A673 (cell line): ENCODE measurements at regions of chr6 and their contacts with region 1.

Region 1: DNA sequence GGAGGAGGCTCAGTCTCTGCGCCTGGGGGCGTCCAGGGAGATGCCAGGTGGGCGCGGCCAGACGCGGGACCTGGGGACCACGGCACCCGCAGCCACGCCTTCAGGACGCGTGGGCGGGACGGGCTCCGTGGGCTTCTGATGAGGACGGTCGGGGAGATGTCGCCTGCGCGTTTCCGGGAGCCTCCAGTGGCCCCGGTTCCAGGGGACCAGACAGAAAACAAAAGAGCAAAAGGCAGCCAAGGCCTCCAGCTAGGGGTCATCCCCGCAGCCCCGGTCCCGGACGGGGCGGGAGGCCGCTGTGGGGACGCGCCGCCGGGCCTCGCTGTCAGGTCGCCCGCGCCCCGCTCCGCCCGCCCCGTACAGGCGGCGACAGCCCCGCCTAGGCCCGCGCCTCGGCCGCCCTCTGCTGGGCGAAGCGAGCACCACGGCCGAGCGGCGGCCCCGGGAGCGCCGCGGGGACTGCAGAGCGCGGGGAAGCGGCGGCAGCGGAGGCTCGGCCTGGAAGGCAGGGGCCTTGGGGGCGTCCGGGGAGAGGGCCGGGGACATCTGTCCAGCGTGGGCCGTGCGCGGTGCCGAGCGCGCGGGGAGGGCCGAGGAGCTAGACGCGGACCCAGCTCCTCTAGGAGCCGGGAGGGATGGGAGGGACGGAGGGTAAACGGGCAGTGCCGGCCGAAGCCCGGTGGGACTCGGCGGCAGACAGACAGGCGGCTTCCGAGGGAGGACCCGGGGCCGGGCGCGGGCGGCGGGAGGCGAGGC is 48.7 kb downstream of the TMEM242 start:
- DNase-seq: peak; percentile 86
- H3K4me3 ChIP-seq: peak overlapping the region; percentile 62
- H3K27ac ChIP-seq: peak overlapping the region; percentile 61
- H3K4me1 ChIP-seq: peaks cover 14% of the 10 kb centered on the region
- H3K27me3 ChIP-seq: no peaks in the 10 kb centered on the region
- CTCF ChIP-seq: peak; percentile 51; the same call in 1 of the 2 replicates

Region 2: GRCh38 chr6:156564127-156564806 is 710.4 kb before region 1 on chr6:
- CTCF ChIA-PET with region 1: no interaction called
- POLR2A ChIA-PET with region 1: no interaction called
- intact Hi-C with region 1: loop called (anchors 10 kb)
- DNase-seq: peak; percentile 70
- H3K4me3 ChIP-seq: no peak overlapping the region
- H3K27ac ChIP-seq: no peak overlapping the region
- H3K4me1 ChIP-seq: no peaks in the 10 kb centered on the region
- H3K27me3 ChIP-seq: no peaks in the 10 kb centered on the region
- CTCF ChIP-seq: peak; percentile 99

Region 3: DNA sequence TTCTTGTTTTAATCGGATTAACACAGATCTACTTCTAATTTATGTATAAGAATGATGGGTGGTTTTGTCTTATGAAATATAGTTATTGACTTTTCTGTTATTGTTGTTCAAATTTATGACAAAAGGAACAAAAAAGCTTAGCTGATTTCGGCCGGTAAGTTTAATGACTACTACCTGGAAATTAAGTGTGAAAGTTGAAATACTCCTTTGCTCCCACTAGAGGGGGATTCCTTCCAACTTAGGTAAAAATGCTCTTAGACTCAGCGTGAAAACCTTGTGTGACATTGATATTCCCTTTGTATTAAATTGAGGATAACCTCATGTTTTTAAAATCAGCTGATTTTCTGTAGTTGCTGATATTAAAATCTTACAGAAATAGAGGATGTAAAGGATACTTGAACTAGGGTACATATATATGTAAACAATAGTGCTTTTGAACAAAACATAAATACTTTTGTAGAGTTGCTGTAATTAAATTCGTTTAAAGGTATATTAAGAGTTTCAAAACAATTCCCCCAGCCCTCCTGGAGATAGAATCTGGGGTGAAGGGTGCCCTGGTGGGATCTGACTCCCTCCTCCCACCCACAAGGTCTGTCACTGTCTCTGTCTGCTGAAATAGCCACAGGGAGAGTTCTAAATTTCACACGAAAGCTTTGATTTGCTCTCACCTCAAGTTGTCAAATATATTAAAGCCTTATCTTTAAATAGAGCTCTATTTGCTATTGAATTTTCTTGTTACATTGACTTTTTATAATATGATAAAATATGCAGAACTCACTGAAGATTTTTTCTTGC is 240.0 kb before region 1 on chr6:
- CTCF ChIA-PET with region 1: no interaction called
- POLR2A ChIA-PET with region 1: no interaction called
- intact Hi-C with region 1: loop called (anchors 10 kb)
- DNase-seq: peak; percentile 74
- H3K4me3 ChIP-seq: no peak overlapping the region
- H3K27ac ChIP-seq: no peak overlapping the region
- H3K4me1 ChIP-seq: peaks cover 34% of the 10 kb centered on the region
- H3K27me3 ChIP-seq: no peaks in the 10 kb centered on the region
- CTCF ChIP-seq: peak; percentile 71

Region 4: DNA sequence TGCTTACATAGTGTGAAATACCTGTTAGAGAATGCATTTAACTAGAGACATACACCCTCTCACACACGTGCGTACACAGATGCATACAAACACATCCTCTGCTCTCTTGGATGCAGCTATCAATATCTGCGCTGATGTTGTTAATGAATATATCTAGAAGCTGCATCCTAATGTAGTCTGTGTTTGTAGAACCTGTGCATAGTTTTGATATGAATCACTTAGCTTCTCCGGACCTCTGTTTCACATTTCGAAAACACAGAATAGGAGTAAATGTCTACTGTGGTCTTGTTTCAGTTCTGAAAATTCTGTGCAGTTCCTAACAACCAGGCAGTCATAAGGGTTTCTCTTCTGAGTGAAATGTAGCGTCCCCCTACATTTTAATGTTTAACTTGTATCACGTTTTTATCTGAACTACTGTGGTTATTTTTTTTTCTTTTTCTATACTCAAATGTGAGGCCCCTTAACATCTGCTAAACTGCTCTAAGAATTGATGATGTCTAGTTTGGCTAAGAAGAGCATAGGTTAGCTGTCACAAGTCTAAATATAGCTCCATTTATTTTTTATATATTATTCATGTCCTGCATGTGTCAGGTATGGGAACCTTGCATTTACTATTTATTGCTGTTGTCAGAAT is 205.8 kb before region 1 on chr6:
- CTCF ChIA-PET with region 1: no interaction called
- POLR2A ChIA-PET with region 1: no interaction called
- intact Hi-C with region 1: no loop called
- DNase-seq: no peak
- H3K4me3 ChIP-seq: no peak overlapping the region
- H3K27ac ChIP-seq: no peak overlapping the region
- H3K4me1 ChIP-seq: peaks cover 42% of the 10 kb centered on the region
- H3K27me3 ChIP-seq: no peaks in the 10 kb centered on the region
- CTCF ChIP-seq: no peak

Region 5: GRCh38 chr6:157184202-157185020 is 90.2 kb before region 1 on chr6:
- CTCF ChIA-PET with region 1: no interaction called
- POLR2A ChIA-PET with region 1: interaction called, 11 read pairs
- intact Hi-C with region 1: loop called (anchors 1 kb)
- DNase-seq: peak; percentile 73
- H3K4me3 ChIP-seq: no peak overlapping the region
- H3K27ac ChIP-seq: no peak overlapping the region
- H3K4me1 ChIP-seq: no peaks in the 10 kb centered on the region
- H3K27me3 ChIP-seq: no peaks in the 10 kb centered on the region
- CTCF ChIP-seq: peak; percentile 96

Region 6: DNA sequence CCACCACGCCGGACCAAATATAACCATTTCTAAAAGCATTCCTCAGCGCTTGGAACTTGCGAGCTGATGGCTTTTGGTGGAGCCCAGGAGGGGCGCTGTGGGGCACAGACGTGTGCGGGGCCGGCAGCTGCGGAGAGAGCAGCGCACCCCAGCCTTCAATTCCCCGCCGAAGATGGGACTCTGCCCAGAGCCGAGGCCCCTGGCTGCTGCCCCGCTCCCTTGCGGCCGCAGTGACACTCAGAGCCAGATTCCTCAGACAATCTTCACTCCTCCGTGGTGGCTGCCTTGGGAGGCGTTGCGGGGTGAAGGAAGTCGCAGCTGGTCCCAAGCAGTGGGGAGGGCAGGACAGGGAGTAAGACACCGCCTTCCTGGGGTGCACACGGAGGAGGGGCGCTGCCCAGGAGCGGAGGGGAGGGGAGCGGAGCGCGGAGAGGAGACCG is 39.0 kb before region 1 on chr6:
- CTCF ChIA-PET with region 1: interaction called, 3 read pairs
- POLR2A ChIA-PET with region 1: interaction called, 3 read pairs
- intact Hi-C with region 1: loop called (anchors 5 kb)
- DNase-seq: peak; percentile 73
- H3K4me3 ChIP-seq: peak overlapping the region; percentile 59
- H3K27ac ChIP-seq: no peak overlapping the region
- H3K4me1 ChIP-seq: peaks cover 12% of the 10 kb centered on the region
- H3K27me3 ChIP-seq: peaks cover 21% of the 10 kb centered on the region
- CTCF ChIP-seq: peak; percentile 84